K562 (cell line): ENCODE measurements at regions of chr9 and their contacts with region 1.

Region 1: GRCh38 chr9:92325269-92325990 is at the starts of genes CENPP and NOL8:
- DNase-seq: peak; percentile 84 to 92 (median 88)
- ATAC-seq: peak; percentile 94
- H3K4me3 ChIP-seq: peak within 1 kb of the TSS; percentile 57
- H3K27ac ChIP-seq: peak within 1 kb of the TSS; percentile 98
- H3K4me1 ChIP-seq: peaks cover 5 to 16% of the 10 kb centered on the region in 2 experiments; a peak in 3 of 5 replicates
- H3K27me3 ChIP-seq: no peaks in the 10 kb centered on the region
- CTCF ChIP-seq: no peak
- EP300 ChIP-seq: 0 out of 2 replicates have a peak, but pooled peaks have one; percentile 6
- POLR2A ChIP-seq: peak; percentile 89
- RAD21 ChIP-seq: no peak
- polyA plus RNA-seq, gene CENPP: 8.0 to 10.2 TPM
- polyA plus RNA-seq, gene NOL8: 83.4 to 91.5 TPM

Region 2: DNA sequence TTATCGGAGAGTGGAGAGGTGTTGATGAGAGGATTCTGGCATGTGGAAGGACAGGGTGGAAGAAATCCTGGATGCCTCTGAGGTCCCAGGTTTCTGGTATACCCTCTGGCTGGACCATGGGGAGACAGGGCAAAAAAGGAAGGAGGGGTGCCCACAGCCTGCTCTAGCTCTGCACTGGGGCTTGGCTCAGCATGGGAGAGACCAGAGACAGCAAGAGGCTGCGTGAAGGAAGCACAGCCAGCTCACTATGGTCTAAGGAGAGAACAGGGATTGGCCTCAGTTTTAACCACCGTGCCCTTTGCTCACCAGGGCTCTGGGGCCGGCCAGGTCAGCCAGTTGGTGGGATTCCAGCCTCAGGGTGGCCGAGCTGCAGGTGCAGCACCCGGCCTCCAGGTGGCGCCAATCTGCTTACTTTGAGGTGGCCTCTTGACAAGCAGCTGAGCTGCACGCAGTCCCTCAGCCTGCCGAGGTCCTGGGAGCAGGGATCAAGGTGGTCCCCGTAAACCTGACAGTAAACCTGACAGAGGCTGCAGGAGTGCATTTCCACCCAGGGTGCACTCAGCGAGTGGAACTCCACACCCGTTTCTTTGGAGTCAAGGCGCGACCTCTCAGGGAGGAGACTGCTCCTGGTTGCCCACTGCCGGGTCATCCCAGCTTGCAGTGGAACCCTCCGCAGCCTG is 185.2 kb before region 1 on chr9:
- CTCF ChIA-PET with region 1: no interaction called
- POLR2A ChIA-PET with region 1: no interaction called
- in situ Hi-C with region 1: no loop called
- intact Hi-C with region 1: loop called (anchors 5 kb)
- DNase-seq: peak; percentile 74 to 86 (median 77)
- ATAC-seq: peak; percentile 78
- H3K4me3 ChIP-seq: no peak overlapping the region
- H3K27ac ChIP-seq: no peak overlapping the region
- H3K4me1 ChIP-seq: peaks cover 6 to 36% of the 10 kb centered on the region in 2 experiments; a peak in 4 of 5 replicates
- H3K27me3 ChIP-seq: peaks cover 0 to 10% of the 10 kb centered on the region in 2 experiments; a peak in 1 of 5 replicates
- CTCF ChIP-seq: peak; percentile 87 to 92 (median 91)
- EP300 ChIP-seq: no peak
- POLR2A ChIP-seq: no peak
- RAD21 ChIP-seq: peak; percentile 75 to 91

Region 3: DNA sequence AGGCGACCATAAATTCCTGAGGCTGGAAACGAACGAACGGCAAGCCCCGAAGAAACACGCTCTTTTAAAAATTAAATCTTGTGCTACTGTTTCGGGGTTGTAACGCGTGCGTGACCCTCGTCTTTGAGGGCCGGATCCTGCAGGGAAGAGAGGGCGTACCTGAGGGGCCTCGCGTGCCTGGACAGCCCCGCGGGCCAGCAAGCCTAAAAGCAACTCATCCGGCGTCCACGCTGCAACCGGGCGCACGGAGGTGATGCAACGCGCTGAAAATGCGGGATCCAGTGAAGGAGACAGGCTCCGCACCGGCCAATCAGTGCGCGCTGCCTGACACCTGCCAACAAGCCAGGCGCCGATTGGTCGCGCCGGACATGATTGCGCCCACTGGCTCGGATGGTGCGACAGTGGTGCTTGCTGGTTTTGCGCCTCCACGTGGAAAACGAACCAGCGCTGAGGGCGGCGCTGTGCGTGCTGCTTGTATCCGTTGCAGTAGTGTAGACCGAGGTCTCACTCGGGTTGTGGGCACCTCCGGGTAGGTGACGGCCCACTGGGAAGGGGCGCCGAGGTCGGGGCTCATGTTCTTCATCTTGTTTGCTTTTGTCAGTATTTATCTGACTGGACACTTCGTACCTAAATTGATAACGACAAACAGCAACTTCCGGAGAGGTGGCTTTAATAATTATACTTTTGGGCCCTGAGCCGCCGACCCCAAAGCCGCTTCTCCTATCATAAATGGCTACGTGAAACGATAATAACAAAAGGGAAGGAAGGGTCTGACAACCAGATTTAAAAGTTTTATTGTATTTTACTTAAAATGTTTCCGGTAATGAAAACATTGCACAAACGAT is 31.8 kb before region 1 on chr9 and contains the start of gene IARS1:
- CTCF ChIA-PET with region 1: no interaction called
- POLR2A ChIA-PET with region 1: interaction called, 12 read pairs
- in situ Hi-C with region 1: no loop called
- intact Hi-C with region 1: loop called (anchors 2 kb)
- DNase-seq: peak; percentile 99
- ATAC-seq: peak; percentile 87
- H3K4me3 ChIP-seq: peak within 1 kb of the TSS; percentile 70
- H3K27ac ChIP-seq: peak within 1 kb of the TSS; percentile 97
- H3K4me1 ChIP-seq: peaks cover 7 to 23% of the 10 kb centered on the region in 2 experiments
- H3K27me3 ChIP-seq: no peaks in the 10 kb centered on the region
- CTCF ChIP-seq: peak; percentile 53 to 60 (median 55)
- EP300 ChIP-seq: peak; percentile 72
- POLR2A ChIP-seq: peak; percentile 94
- RAD21 ChIP-seq: peak in 1 of 2 experiments; percentile 25; a peak in 2 of 4 replicates
- polyA plus RNA-seq, gene IARS1: 119 to 224 TPM

Region 4: DNA sequence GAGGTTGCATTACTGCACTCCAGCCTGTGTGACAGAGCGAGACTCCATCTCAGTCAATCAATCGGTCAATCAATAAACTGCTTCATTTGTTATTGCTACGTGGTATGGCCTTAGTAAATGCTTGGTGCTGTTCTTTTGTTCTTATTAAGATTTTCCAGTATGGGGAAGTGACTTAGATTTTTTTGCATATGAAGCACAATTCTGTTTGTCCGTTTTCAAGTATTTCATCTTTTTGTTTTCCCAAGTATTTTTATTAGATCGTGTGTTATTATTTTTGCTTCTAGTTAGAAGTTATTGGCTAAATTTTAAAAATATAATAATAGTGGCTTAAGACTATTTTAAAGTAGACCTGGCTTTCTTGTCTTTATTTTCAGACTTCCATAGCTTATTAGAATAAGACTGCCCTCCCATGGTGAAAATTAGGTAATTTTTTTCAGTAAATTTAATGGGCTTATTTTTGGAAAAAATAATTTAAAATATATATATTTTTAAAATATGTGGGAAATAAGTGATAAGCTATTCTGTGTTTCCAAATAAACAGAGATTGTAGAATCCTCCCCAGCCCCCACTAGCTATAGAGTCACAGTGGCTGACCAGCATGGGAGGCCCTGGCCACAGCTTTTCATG is 113.6 kb after region 1 on chr9:
- CTCF ChIA-PET with region 1: interaction called, 13 read pairs
- POLR2A ChIA-PET with region 1: no interaction called
- in situ Hi-C with region 1: no loop called
- intact Hi-C with region 1: loop called (anchors 5 kb)
- DNase-seq: no peak
- ATAC-seq: no peak
- H3K4me3 ChIP-seq: no peak overlapping the region
- H3K27ac ChIP-seq: no peak overlapping the region
- H3K4me1 ChIP-seq: no peaks in the 10 kb centered on the region
- H3K27me3 ChIP-seq: no peaks in the 10 kb centered on the region
- CTCF ChIP-seq: peak in 2 of 3 experiments; percentile 9 to 53; a peak in 3 of 6 replicates
- EP300 ChIP-seq: no peak
- POLR2A ChIP-seq: no peak
- RAD21 ChIP-seq: peak; percentile 41 to 51

Region 5: GRCh38 chr9:92634712-92635605 is 309.5 kb after region 1 on chr9:
- CTCF ChIA-PET with region 1: interaction called, 14 read pairs
- POLR2A ChIA-PET with region 1: interaction called, 3 read pairs
- in situ Hi-C with region 1: loop called (anchors 10 kb)
- intact Hi-C with region 1: loop called (anchors 2 kb)
- DNase-seq: peak; percentile 82 to 85 (median 83)
- ATAC-seq: peak; percentile 99
- H3K4me3 ChIP-seq: no peak overlapping the region
- H3K27ac ChIP-seq: no peak overlapping the region
- H3K4me1 ChIP-seq: peaks cover 0 to 5% of the 10 kb centered on the region in 2 experiments; a peak in 1 of 5 replicates
- H3K27me3 ChIP-seq: no peaks in the 10 kb centered on the region
- CTCF ChIP-seq: peak; percentile 98 to 100 (median 99)
- EP300 ChIP-seq: no peak
- POLR2A ChIP-seq: no peak
- RAD21 ChIP-seq: peak; percentile 87 to 94